Panc1 (cell line): ENCODE measurements at regions of chr16 and their contacts with region 1.

Region 1: GRCh38 chr16:2500918-2501750 is 12.6 kb upstream of the ATP6V0C start:
- DNase-seq: peak; percentile 42
- ATAC-seq: peak; percentile 94
- H3K4me3 ChIP-seq: no peak overlapping the region
- H3K27ac ChIP-seq: no peak overlapping the region; the same call in 1 of the 2 replicates
- H3K4me1 ChIP-seq: peaks cover 23% of the 10 kb centered on the region
- H3K27me3 ChIP-seq: no peaks in the 10 kb centered on the region
- CTCF ChIP-seq: peak; percentile 97

Region 2: DNA sequence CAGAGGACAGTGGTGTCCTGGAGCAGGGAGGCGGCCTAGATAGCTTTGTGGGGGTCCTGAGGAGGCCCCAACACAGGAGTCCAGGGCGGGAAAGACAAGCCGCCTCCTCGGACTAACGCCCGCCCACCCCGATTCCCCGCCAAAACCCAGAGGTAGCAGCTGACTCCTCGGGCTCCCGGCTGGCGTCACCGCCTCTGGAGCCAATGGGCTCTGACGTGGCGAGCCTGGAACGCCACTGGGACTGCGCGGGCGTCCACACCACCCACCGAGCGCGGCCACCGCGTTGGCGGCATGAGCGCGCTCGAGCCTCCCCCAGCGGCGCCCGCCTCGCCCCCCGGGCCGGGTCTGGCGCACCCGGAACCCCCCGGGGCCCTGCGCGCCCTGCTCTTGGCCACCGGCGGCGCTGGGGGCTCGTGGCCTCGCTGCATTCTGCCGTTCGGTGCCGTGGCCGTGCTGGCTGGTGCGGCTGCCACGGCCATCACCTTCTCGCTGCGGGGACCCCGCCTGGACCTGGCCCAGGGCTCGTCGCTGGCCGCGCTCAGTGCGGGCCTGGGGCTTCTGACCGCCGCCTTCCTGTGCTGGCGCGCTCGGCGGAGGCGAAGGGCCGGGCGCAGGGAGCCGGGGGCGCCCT is 33.5 kb before region 1 on chr16:
- CTCF ChIA-PET with region 1: interaction called, 6 read pairs
- POLR2A ChIA-PET with region 1: interaction called, 10 read pairs
- in situ Hi-C with region 1: no loop called
- intact Hi-C with region 1: no loop called
- DNase-seq: no peak
- ATAC-seq: peak; percentile 56
- H3K4me3 ChIP-seq: peak overlapping the region; percentile 42 to 59
- H3K27ac ChIP-seq: peak overlapping the region; percentile 69
- H3K4me1 ChIP-seq: peaks cover 42% of the 10 kb centered on the region
- H3K27me3 ChIP-seq: no peaks in the 10 kb centered on the region
- CTCF ChIP-seq: peak; percentile 35; the same call in 1 of the 2 replicates